Endothelial cell of umbilical vein (primary cell): ENCODE measurements at regions of chr19 and their contacts with region 1.

Region 1: DNA sequence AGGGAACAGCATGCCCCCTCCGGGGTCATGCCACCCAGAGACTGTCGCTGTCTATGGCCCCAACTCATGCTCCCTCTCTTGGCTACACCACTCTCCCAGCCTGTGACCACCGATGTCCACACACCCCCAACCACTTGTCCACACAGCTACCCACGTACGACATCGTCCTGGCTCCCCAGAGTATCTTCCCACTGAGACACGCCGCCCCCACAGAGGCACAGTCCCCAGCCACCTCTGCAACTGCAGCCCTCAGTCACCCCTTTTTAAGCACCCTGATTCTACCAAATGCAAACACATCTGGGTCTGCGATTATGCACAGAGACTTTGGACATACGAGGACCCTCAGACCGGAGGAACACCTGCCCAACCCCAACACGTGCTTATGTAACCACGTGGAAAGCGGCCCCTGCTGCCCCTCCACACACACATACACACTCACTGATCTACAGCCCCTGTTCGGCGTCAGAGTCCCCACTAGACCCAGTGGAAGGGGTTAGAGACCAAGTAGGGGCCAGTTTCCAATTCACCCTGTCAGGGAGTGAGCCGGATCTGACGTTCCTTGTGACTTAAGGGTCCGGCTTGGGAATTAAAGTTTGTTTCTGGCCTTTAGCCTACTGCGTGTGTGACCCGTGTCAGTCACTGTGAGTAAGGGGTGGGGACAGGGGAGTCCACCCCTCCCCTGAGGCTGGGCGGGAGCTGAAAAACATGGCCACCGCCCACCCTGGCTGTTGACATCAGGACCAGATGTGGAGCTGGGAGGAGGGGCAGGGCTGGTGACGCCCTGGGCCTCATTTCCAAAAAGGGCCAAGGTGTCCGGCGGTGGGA is 11.9 kb upstream of the AXL start:
- DNase-seq: no peak
- H3K4me3 ChIP-seq: no peak overlapping the region
- H3K27ac ChIP-seq: no peak overlapping the region
- H3K4me1 ChIP-seq: no peaks in the 10 kb centered on the region
- H3K27me3 ChIP-seq: no peaks in the 10 kb centered on the region
- CTCF ChIP-seq: no peak
- POLR2A ChIP-seq: no peak

Region 2: DNA sequence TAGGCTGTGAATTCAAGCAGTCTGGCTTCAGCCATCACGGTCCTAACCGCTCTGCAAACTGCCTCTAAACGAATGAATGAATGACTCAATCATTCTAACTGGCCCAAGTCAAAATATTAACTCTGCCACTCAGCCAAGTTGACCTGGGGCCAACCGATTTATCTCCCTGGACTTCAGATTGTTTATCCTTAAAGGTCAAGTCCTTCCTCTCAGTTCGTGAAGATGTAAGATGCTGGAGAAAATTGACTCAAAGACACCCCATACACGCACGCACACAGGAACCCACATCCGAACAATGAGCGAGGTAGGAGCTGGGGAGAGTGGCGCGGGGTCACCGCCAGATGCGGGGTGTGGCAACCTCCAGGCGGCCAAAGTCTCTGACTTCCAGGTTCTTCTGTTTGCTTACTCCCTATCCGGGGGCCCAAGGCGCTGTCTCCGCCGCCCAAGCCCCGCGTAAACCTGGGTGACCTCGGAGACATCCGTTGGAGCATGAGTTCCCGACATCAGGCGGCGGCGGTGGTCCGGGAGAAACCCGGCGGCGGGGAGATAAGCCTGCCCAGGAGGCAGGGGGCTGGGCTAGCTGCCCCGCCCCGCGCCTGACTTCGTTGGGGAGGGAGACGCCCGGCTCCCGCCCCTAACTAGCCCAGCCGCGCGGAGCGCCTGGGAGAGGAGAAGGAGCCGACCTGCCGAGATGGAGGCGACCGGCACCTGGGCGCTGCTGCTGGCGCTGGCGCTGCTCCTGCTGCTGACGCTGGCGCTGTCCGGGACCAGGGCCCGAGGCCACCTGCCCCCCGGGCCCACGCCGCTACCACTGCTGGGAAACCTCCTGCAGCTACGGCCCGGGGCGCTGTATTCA is 14.3 kb before region 1 on chr19 and contains the start of gene CYP2S1:
- CTCF ChIA-PET with region 1: interaction called, 11 read pairs
- POLR2A ChIA-PET with region 1: no interaction called
- dilution Hi-C with region 1: no loop called
- intact Hi-C with region 1: no loop called
- DNase-seq: no peak
- H3K4me3 ChIP-seq: peak within 1 kb of the TSS in 2 of 3 experiments; percentile 10 to 37
- H3K27ac ChIP-seq: no peak within 1 kb of the TSS
- H3K4me1 ChIP-seq: peaks cover 20% of the 10 kb centered on the region
- H3K27me3 ChIP-seq: peaks cover 7 to 8% of the 10 kb centered on the region in 2 experiments
- CTCF ChIP-seq: no peak
- POLR2A ChIP-seq: no peak
- total RNA-seq, gene CYP2S1: 1.6 and 4.5 TPM in 2 replicates

Region 3: DNA sequence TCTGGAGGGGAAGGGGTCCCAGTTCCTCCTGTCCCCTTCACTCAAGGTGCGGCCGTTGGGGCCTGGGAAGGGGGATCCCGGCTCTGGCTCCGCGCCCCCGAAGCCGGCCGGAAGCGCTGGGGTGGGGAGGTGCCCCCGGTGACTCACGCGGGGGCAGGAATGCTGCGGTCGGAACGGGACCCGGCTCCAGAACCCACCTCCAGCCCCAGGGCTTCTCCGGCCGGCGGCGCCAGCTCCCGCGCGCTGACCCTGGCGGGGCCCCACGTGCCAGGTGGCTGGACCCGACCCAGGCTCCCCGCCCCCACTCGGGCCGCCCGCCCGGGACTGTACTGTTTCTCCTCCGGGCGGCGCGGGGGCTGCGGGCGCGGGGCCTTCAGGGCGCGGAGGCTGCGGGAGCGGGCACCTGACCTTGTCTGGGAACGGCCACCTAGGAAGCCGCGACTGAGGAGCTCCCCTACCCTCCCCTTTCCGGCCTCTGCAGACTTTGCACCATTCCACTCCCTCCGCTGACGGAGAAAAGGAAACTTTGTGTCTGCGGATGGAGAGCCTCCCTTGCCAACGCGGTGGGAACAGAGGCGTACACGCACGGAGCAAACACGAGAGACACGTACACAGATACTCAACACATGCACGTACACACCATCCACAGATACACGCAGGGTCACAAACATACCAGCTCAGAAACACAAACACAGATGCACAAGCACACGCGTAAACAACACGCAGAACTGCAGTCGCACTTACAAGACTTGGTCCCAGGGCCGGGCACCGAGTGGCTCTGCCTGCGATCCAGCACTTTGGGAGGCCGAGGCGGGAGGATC is 19.1 kb after region 1 on chr19:
- CTCF ChIA-PET with region 1: interaction called, 50 read pairs
- POLR2A ChIA-PET with region 1: no interaction called
- dilution Hi-C with region 1: no loop called
- intact Hi-C with region 1: loop called (anchors 2 kb)
- DNase-seq: peak; percentile 59
- H3K4me3 ChIP-seq: peak overlapping the region in 2 of 3 experiments; percentile 32 to 50
- H3K27ac ChIP-seq: peak overlapping the region; percentile 76
- H3K4me1 ChIP-seq: peaks cover 44% of the 10 kb centered on the region
- H3K27me3 ChIP-seq: no peaks in the 10 kb centered on the region
- CTCF ChIP-seq: no peak
- POLR2A ChIP-seq: no peak

Region 4: GRCh38 chr19:41248895-41249294 is 41.8 kb after region 1 on chr19:
- CTCF ChIA-PET with region 1: interaction called, 14 read pairs
- POLR2A ChIA-PET with region 1: interaction called, 8 read pairs
- dilution Hi-C with region 1: no loop called
- intact Hi-C with region 1: no loop called
- DNase-seq: no peak
- H3K4me3 ChIP-seq: no peak overlapping the region
- H3K27ac ChIP-seq: no peak overlapping the region
- H3K4me1 ChIP-seq: no peaks in the 10 kb centered on the region
- H3K27me3 ChIP-seq: no peaks in the 10 kb centered on the region
- CTCF ChIP-seq: no peak
- POLR2A ChIP-seq: no peak

Region 5: GRCh38 chr19:41310033-41310758 is 103.1 kb after region 1 on chr19 and contains the start of gene CCDC97:
- CTCF ChIA-PET with region 1: interaction called, 62 read pairs
- POLR2A ChIA-PET with region 1: interaction called, 5 read pairs
- dilution Hi-C with region 1: no loop called
- intact Hi-C with region 1: loop called (anchors 1 kb)
- DNase-seq: peak; percentile 91
- H3K4me3 ChIP-seq: peak within 1 kb of the TSS; percentile 71 to 97 (median 81)
- H3K27ac ChIP-seq: peak within 1 kb of the TSS; percentile 57
- H3K4me1 ChIP-seq: peaks cover 42% of the 10 kb centered on the region
- H3K27me3 ChIP-seq: no peaks in the 10 kb centered on the region
- CTCF ChIP-seq: no peak
- POLR2A ChIP-seq: peak; percentile 98
- total RNA-seq, gene CCDC97: 24.2 and 27.2 TPM in 2 replicates